ENCODE measurements at regions of chr9 and their contacts with region 1.

Region 1: DNA sequence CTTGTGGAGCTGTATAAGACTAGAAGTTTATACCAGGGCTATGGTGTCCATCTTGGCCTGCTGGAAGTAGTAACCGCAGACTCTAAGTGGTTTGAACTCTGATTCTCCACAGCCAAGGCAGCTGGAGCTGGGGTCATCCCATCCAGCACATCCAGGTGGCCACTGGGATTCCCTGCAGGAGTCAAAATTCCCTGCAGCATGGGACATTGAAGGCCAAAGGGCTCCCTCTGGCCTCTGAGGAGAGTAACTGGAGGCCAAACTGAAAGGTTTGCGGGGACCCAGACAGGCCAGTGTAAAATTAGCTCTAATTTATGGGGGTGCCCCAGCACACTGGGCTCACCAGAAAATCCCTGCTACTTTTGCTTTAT is 12.2 kb upstream of the PRXL2C start:
- DNase-seq: no peak
- H3K4me3 ChIP-seq: no peak overlapping the region
- H3K27ac ChIP-seq: no peak overlapping the region
- H3K4me1 ChIP-seq: no peaks in the 10 kb centered on the region
- H3K27me3 ChIP-seq: no peaks in the 10 kb centered on the region
- CTCF ChIP-seq: no peak
- EP300 ChIP-seq: no peak
- POLR2A ChIP-seq: no peak

Region 2: GRCh38 chr9:96327694-96328352 is 339.5 kb before region 1 on chr9:
- intact Hi-C with region 1: loop called (anchors 2 kb)
- DNase-seq: no peak
- H3K4me3 ChIP-seq: no peak overlapping the region
- H3K27ac ChIP-seq: no peak overlapping the region
- H3K4me1 ChIP-seq: no peaks in the 10 kb centered on the region
- H3K27me3 ChIP-seq: no peaks in the 10 kb centered on the region
- CTCF ChIP-seq: peak; percentile 72 to 87 (median 76)
- EP300 ChIP-seq: no peak
- POLR2A ChIP-seq: no peak